CD8-positive, alpha-beta T cell (primary cell): ENCODE measurements at regions of chr3 and their contacts with region 1.

Region 1: GRCh38 chr3:184335661-184336546 is 1.5 kb upstream of the FAM131A start:
- DNase-seq: peak; percentile 78 to 94 (median 86)
- ATAC-seq: peak; percentile 72
- H3K4me3 ChIP-seq: peak overlapping the region; percentile 50 to 63
- H3K4me3 Mint-ChIP-seq: peak overlapping the region; percentile 90
- H3K27ac ChIP-seq: peak overlapping the region; percentile 81 to 97
- H3K27ac Mint-ChIP-seq: peak overlapping the region; percentile 96
- H3K4me1 ChIP-seq: peaks cover 16% of the 10 kb centered on the region
- H3K4me1 Mint-ChIP-seq: peaks cover 25% of the 10 kb centered on the region
- H3K27me3 ChIP-seq: no peaks in the 10 kb centered on the region
- H3K27me3 Mint-ChIP-seq: no peaks in the 10 kb centered on the region
- CTCF ChIP-seq: no peak

Region 2: GRCh38 chr3:184314363-184314699 is 21.6 kb before region 1 on chr3 and contains the start of gene EIF4G1:
- CTCF ChIA-PET with region 1: no interaction called
- POLR2A ChIA-PET with region 1: no interaction called
- intact Hi-C with region 1: loop called (anchors 1 kb)
- DNase-seq: peak; percentile 83 to 98 (median 92)
- ATAC-seq: peak; percentile 78
- H3K4me3 ChIP-seq: peak within 1 kb of the TSS; percentile 60 to 64
- H3K4me3 Mint-ChIP-seq: peak within 1 kb of the TSS; percentile 87
- H3K27ac ChIP-seq: peak within 1 kb of the TSS; percentile 80 to 93
- H3K27ac Mint-ChIP-seq: peak within 1 kb of the TSS; percentile 94
- H3K4me1 ChIP-seq: peaks cover 23% of the 10 kb centered on the region
- H3K4me1 Mint-ChIP-seq: peaks cover 33% of the 10 kb centered on the region
- H3K27me3 ChIP-seq: no peaks in the 10 kb centered on the region
- H3K27me3 Mint-ChIP-seq: no peaks in the 10 kb centered on the region
- CTCF ChIP-seq: no peak
- total RNA-seq, gene EIF4G1: 220 to 235 TPM

Region 3: DNA sequence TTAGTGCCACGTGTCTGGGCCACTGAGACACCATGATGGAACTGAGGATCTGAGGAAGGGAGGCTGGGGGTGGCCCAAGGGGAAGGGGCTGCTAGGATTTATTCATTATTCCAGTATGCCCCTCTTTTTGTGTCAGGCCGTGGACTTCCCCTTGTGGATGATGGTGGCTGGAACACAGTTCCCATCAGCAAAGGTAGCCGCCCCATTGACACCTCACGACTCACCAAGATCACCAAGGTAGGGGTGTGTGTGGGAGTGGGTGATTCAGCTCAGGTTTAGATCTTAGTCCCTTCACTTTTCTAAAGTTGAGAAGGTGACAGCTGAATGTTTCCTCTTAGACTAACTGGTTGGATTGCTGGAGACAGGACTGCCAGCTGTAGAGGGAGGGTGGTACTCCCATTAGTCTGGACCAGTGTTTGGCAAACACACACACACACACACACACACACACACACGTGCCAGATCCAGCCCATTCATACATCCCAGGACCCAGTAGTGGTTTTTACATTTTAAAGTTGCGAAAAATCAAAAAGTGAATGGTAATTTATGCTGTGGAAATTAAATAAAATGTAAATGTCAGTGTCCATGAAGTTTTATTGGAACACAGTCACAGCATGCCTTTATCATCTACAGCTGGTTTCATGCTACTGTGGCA is 10.1 kb before region 1 on chr3:
- CTCF ChIA-PET with region 1: no interaction called
- POLR2A ChIA-PET with region 1: no interaction called
- intact Hi-C with region 1: no loop called
- DNase-seq: no peak
- ATAC-seq: no peak
- H3K4me3 ChIP-seq: no peak overlapping the region
- H3K4me3 Mint-ChIP-seq: no peak overlapping the region
- H3K27ac ChIP-seq: no peak overlapping the region
- H3K27ac Mint-ChIP-seq: peak overlapping the region; percentile 57
- H3K4me1 ChIP-seq: no peaks in the 10 kb centered on the region
- H3K4me1 Mint-ChIP-seq: no peaks in the 10 kb centered on the region
- H3K27me3 ChIP-seq: no peaks in the 10 kb centered on the region
- H3K27me3 Mint-ChIP-seq: no peaks in the 10 kb centered on the region
- CTCF ChIP-seq: no peak

Region 4: GRCh38 chr3:184399410-184399809 is 63.5 kb after region 1 on chr3:
- CTCF ChIA-PET with region 1: no interaction called
- POLR2A ChIA-PET with region 1: no interaction called
- intact Hi-C with region 1: no loop called
- DNase-seq: no peak
- ATAC-seq: no peak
- H3K4me3 ChIP-seq: no peak overlapping the region
- H3K4me3 Mint-ChIP-seq: no peak overlapping the region
- H3K27ac ChIP-seq: no peak overlapping the region
- H3K27ac Mint-ChIP-seq: no peak overlapping the region
- H3K4me1 ChIP-seq: no peaks in the 10 kb centered on the region
- H3K4me1 Mint-ChIP-seq: no peaks in the 10 kb centered on the region
- H3K27me3 ChIP-seq: peaks cover 4 to 6% of the 10 kb centered on the region in 2 experiments
- H3K27me3 Mint-ChIP-seq: peaks cover 25% of the 10 kb centered on the region
- CTCF ChIP-seq: no peak